Activated naive CD4-positive, alpha-beta T cell treated with anti-CD3 and anti-CD28 coated beads for 36 hours (primary cell): ENCODE measurements at regions of chr4 and their contacts with region 1.

Region 1: GRCh38 chr4:1249148-1249730 is 309 bp upstream of the CTBP1 start:
- DNase-seq: peak; percentile 77
- H3K4me3 Mint-ChIP-seq: peak overlapping the region; percentile 82
- H3K27ac Mint-ChIP-seq: peak overlapping the region; percentile 94
- H3K4me1 Mint-ChIP-seq: peaks cover 73% of the 10 kb centered on the region
- H3K27me3 Mint-ChIP-seq: no peaks in the 10 kb centered on the region

Region 2: GRCh38 chr4:705278-706082 is 543.8 kb before region 1 on chr4 and contains the start of gene PCGF3:
- CTCF ChIA-PET with region 1: no interaction called
- intact Hi-C with region 1: loop called (anchors 2 kb)
- DNase-seq: peak; percentile 96
- H3K4me3 Mint-ChIP-seq: peak within 1 kb of the TSS; percentile 76
- H3K27ac Mint-ChIP-seq: no peak within 1 kb of the TSS
- H3K4me1 Mint-ChIP-seq: peaks cover 13% of the 10 kb centered on the region
- H3K27me3 Mint-ChIP-seq: no peaks in the 10 kb centered on the region
- total RNA-seq, gene PCGF3: 24.7 to 25.9 TPM

Region 3: GRCh38 chr4:1011022-1011694 is 238.1 kb before region 1 on chr4 and contains the start of gene FGFRL1:
- CTCF ChIA-PET with region 1: no interaction called
- intact Hi-C with region 1: loop called (anchors 5 kb)
- DNase-seq: peak; percentile 95
- H3K4me3 Mint-ChIP-seq: peak within 1 kb of the TSS; percentile 73
- H3K27ac Mint-ChIP-seq: peak within 1 kb of the TSS; percentile 46
- H3K4me1 Mint-ChIP-seq: peaks cover 11% of the 10 kb centered on the region
- H3K27me3 Mint-ChIP-seq: peaks cover 26% of the 10 kb centered on the region
- total RNA-seq, gene FGFRL1: 7.6 to 8.0 TPM

Region 4: DNA sequence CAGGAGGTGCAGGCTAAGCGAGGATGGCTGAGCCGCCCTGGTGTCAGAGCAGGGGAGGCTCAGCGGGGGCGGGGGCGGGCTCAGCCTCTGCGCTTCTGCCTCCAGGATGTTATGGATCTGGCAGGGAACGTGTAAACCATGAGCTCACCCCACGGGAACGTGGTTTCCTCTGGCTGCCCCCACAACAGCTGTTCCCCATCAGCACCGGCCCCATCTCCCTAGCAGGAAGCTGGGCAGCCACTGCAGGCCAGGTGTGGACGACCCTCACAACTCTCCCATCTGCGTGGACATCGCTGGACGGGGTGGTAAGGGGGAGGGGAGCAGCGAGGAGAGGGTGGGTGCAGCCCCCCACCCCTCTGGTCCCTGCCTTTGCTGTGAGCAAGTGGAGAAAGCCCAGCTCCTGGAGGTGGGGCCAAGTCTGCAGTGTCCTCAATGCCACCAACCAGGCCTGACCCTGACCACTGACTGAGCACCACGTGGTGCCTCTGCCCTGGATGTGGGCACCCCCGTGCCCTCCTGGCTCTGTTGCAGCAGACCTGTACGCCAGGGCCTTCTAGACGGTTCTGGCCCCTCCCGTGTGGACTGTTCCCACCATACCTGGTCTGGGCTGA is 48.7 kb before region 1 on chr4:
- CTCF ChIA-PET with region 1: no interaction called
- intact Hi-C with region 1: loop called (anchors 1 kb)
- DNase-seq: no peak
- H3K4me3 Mint-ChIP-seq: peak overlapping the region; percentile 60
- H3K27ac Mint-ChIP-seq: no peak overlapping the region
- H3K4me1 Mint-ChIP-seq: peaks cover 19% of the 10 kb centered on the region
- H3K27me3 Mint-ChIP-seq: no peaks in the 10 kb centered on the region

Region 5: GRCh38 chr4:1289207-1290164 is 40.2 kb after region 1 on chr4 and contains the start of gene MAEA:
- CTCF ChIA-PET with region 1: interaction called, 6 read pairs
- intact Hi-C with region 1: loop called (anchors 1 kb)
- DNase-seq: peak; percentile 98
- H3K4me3 Mint-ChIP-seq: peak within 1 kb of the TSS; percentile 87
- H3K27ac Mint-ChIP-seq: peak within 1 kb of the TSS; percentile 82
- H3K4me1 Mint-ChIP-seq: peaks cover 40% of the 10 kb centered on the region
- H3K27me3 Mint-ChIP-seq: no peaks in the 10 kb centered on the region
- total RNA-seq, gene MAEA: 25.2 to 29.4 TPM

Region 6: DNA sequence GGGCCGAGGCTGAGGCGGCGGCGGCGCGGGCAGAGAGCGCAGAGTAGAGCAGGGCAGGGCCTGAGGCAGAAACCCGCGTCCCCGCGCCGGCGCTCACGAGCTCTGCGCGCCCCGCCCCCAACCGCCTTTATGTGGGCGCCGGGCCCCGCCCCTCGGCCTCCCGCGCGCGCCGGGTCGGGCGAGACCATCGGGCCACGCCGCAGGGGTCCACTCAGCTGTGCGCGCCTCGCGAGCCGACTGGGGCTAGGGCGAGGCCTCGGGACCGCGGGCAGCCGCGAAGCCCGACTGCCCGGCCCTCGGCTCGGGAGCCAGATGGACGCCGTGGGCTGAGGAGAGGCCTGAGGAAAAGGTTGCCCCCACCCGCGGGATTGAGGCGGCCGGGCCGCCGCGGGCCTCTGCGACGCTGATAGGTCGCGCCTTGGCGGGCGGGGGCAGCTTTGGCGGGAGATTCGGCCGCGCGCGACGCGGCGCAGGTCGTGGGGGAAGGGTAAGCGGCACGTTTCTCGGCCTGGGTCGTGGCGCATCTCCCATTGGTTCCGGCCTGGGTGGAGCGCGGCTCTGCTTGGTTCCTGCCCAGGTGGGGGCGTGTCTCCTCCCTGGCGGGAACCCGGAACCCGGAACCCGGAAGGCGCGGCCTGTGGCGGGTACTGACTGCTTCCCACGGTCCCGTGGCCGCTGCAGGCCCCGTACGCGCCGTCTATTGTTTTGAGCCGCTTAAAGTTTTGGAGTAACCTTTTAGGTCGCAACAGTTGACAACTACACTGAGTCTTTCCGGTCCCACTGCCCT is 463.2 kb after region 1 on chr4 and contains the start of gene SLBP:
- CTCF ChIA-PET with region 1: no interaction called
- intact Hi-C with region 1: loop called (anchors 2 kb)
- DNase-seq: peak; percentile 99
- H3K4me3 Mint-ChIP-seq: peak within 1 kb of the TSS; percentile 98
- H3K27ac Mint-ChIP-seq: peak within 1 kb of the TSS; percentile 94
- H3K4me1 Mint-ChIP-seq: peaks cover 68% of the 10 kb centered on the region
- H3K27me3 Mint-ChIP-seq: no peaks in the 10 kb centered on the region
- total RNA-seq, gene SLBP: 75.4 to 77.1 TPM

Region 7: GRCh38 chr4:2008875-2009703 is 759.9 kb after region 1 on chr4 and contains the start of gene NELFA:
- CTCF ChIA-PET with region 1: no interaction called
- intact Hi-C with region 1: loop called (anchors 2 kb)
- DNase-seq: peak; percentile 97
- H3K4me3 Mint-ChIP-seq: peak within 1 kb of the TSS; percentile 85
- H3K27ac Mint-ChIP-seq: peak within 1 kb of the TSS; percentile 87
- H3K4me1 Mint-ChIP-seq: peaks cover 29% of the 10 kb centered on the region
- H3K27me3 Mint-ChIP-seq: no peaks in the 10 kb centered on the region
- total RNA-seq, gene NELFA: 44.1 to 45.3 TPM